Naive thymus-derived CD4-positive, alpha-beta T cell (primary cell): ENCODE measurements at regions of chr3 and their contacts with region 1.

Region 1: DNA sequence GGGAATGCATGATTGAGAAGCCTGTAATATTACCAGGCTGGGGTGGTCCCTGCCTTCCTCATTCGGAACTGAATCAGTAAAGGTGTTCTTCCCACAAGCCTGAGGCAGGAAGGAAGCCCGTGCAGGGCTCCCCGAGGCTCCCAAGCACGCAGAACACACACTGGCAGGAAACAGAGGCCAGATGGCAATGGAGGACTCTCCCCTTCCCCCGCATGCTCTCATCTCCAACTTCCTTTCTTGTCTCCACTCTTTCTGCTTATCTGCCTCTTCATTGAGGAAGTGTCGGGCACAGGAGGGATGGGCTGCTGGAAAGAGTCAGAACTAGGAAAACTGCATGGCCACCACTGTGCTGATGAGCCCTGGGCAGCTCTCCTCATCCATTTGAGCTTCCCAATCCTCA is 123.5 kb downstream of the NUP210 start:
- DNase-seq: no peak
- ATAC-seq: no peak
- H3K4me3 ChIP-seq: no peak overlapping the region
- H3K4me3 Mint-ChIP-seq: no peak overlapping the region
- H3K27ac ChIP-seq: no peak overlapping the region
- H3K27ac Mint-ChIP-seq: no peak overlapping the region
- H3K4me1 ChIP-seq: no peaks in the 10 kb centered on the region
- H3K4me1 Mint-ChIP-seq: peaks cover 0 to 9% (median 8%) of the 10 kb centered on the region in 7 donors
- H3K27me3 ChIP-seq: no peaks in the 10 kb centered on the region
- H3K27me3 Mint-ChIP-seq: peaks cover 18 to 28% (median 24%) of the 10 kb centered on the region in 5 donors

Region 2: GRCh38 chr3:13119471-13120220 is 177.0 kb before region 1 on chr3:
- CTCF ChIA-PET with region 1: no interaction called
- POLR2A ChIA-PET with region 1: no interaction called
- intact Hi-C with region 1: no loop called
- DNase-seq: no peak
- ATAC-seq: no peak
- H3K4me3 ChIP-seq: no peak overlapping the region
- H3K4me3 Mint-ChIP-seq: no peak overlapping the region
- H3K27ac ChIP-seq: no peak overlapping the region
- H3K27ac Mint-ChIP-seq: no peak overlapping the region
- H3K4me1 ChIP-seq: no peaks in the 10 kb centered on the region
- H3K4me1 Mint-ChIP-seq: no peaks in the 10 kb centered on the region
- H3K27me3 ChIP-seq: no peaks in the 10 kb centered on the region
- H3K27me3 Mint-ChIP-seq: peaks cover 0 to 5% (median 0%) of the 10 kb centered on the region in 5 donors

Region 3: GRCh38 chr3:13235897-13236296 is 60.8 kb before region 1 on chr3:
- CTCF ChIA-PET with region 1: no interaction called
- POLR2A ChIA-PET with region 1: no interaction called
- intact Hi-C with region 1: loop called in 1 of 2 experiments (anchors 2 kb)
- DNase-seq: no peak
- ATAC-seq: no peak
- H3K4me3 ChIP-seq: no peak overlapping the region
- H3K4me3 Mint-ChIP-seq: peak overlapping the region in 2 of 10 donors; percentile 1 to 68
- H3K27ac ChIP-seq: no peak overlapping the region
- H3K27ac Mint-ChIP-seq: peak overlapping the region in 2 of 9 donors; percentile 6 to 18
- H3K4me1 ChIP-seq: peaks cover 8 to 28% of the 10 kb centered on the region in 2 donors
- H3K4me1 Mint-ChIP-seq: peaks cover 16 to 34% (median 28%) of the 10 kb centered on the region in 7 donors
- H3K27me3 ChIP-seq: no peaks in the 10 kb centered on the region
- H3K27me3 Mint-ChIP-seq: peaks cover 12 to 22% (median 14%) of the 10 kb centered on the region in 5 donors

Region 4: GRCh38 chr3:14137004-14137403 is 840.3 kb after region 1 on chr3:
- CTCF ChIA-PET with region 1: no interaction called
- POLR2A ChIA-PET with region 1: no interaction called
- intact Hi-C with region 1: no loop called
- DNase-seq: no peak
- ATAC-seq: no peak
- H3K4me3 ChIP-seq: no peak overlapping the region
- H3K4me3 Mint-ChIP-seq: no peak overlapping the region
- H3K27ac ChIP-seq: no peak overlapping the region
- H3K27ac Mint-ChIP-seq: no peak overlapping the region
- H3K4me1 ChIP-seq: peaks cover 16 to 19% of the 10 kb centered on the region in 2 donors
- H3K4me1 Mint-ChIP-seq: peaks cover 12 to 21% (median 16%) of the 10 kb centered on the region in 7 donors
- H3K27me3 ChIP-seq: no peaks in the 10 kb centered on the region
- H3K27me3 Mint-ChIP-seq: no peaks in the 10 kb centered on the region